ENCODE measurements at regions of chr7 and their contacts with region 1.

Region 1: GRCh38 chr7:91835846-91836368 is 44.6 kb downstream of the MTERF1 start:
- DNase-seq: no peak
- H3K4me3 ChIP-seq: no peak overlapping the region
- H3K27ac ChIP-seq: no peak overlapping the region
- H3K4me1 ChIP-seq: peaks cover 0 to 11% (median 2%) of the 10 kb centered on the region in 4 experiments
- H3K27me3 ChIP-seq: no peaks in the 10 kb centered on the region

Region 2: GRCh38 chr7:91880413-91881241 is 44.7 kb after region 1 on chr7 and contains the start of gene MTERF1:
- CTCF ChIA-PET with region 1: interaction called, 11 read pairs
- POLR2A ChIA-PET with region 1: no interaction called
- DNase-seq: peak; percentile 94 to 97 (median 96)
- H3K4me3 ChIP-seq: peak within 1 kb of the TSS; percentile 85 to 100 (median 95)
- H3K27ac ChIP-seq: peak within 1 kb of the TSS; percentile 65 to 81
- H3K4me1 ChIP-seq: peaks cover 4 to 15% (median 9%) of the 10 kb centered on the region in 4 experiments
- H3K27me3 ChIP-seq: no peaks in the 10 kb centered on the region